ENCODE measurements at regions of chr5 and their contacts with region 1.

Region 1: DNA sequence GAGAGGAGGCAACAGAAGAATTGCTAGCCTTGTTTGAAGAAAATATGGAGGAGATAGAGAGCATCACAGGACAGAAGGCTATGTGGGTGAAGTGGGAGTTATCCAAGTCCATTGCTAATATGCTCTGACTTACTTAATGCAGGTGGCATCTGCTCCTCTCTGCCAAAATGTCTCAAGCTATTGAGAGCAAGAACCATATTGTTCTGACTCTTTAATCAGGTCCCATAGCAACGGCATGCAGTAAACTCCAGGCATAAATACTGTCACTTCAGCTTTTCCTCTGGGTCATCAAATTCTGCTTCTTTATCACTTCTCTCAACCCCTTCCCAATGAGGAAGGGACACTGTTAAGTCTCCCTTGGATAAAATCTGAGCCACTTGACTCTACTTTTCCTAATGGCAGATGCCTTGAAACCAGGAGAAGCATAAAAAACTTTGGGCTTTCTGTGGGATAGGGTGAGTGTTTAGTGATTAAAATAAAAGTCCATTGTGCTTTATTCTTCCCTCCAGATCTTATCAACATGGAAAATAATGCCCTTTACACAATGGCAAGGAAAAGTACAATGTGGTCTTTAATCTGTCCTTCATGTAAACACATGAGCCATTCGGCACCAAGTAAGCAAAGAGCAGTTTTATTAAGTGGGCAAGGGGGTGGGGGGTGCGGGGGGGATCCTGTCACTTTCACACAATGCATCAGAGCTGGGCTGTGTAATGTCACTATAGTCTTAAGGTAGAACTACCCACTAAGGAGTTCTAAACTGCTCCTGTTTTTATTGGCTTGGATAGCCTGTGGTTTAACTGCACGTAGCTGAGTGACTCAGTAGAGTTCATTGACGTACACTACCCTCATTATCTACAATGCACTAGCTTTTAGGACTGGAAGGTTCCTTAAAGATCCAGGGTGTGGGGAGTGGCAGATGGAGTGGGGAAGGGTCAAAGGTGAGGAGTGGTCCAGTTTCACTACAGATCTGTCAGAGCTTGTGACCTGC is 71.0 kb upstream of the TARS1 start:
- DNase-seq: no peak
- ATAC-seq: peak; percentile 72

Region 2: DNA sequence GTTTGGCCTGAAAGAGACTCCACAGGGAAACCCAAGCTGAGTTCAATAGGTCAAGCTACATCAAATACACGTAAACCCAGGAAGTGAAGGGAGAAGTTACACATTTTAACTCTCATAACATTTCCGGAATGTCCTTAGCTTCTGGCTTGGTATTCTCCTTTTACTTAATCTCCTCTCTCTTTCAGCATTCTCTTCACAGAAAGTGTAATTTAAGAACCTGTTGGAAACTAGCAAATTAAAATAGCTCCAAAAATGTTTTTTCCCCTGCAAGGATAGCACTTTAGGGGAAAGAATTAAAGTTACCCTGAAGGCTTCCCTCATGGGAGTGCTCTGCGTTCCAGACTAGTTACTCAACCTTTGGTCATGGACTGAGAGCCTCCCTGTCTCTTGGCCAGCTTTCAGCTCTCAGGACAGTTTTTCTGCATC is 221.7 kb before region 1 on chr5:
- intact Hi-C with region 1: no loop called
- DNase-seq: no peak
- ATAC-seq: peak; percentile 97

Region 3: DNA sequence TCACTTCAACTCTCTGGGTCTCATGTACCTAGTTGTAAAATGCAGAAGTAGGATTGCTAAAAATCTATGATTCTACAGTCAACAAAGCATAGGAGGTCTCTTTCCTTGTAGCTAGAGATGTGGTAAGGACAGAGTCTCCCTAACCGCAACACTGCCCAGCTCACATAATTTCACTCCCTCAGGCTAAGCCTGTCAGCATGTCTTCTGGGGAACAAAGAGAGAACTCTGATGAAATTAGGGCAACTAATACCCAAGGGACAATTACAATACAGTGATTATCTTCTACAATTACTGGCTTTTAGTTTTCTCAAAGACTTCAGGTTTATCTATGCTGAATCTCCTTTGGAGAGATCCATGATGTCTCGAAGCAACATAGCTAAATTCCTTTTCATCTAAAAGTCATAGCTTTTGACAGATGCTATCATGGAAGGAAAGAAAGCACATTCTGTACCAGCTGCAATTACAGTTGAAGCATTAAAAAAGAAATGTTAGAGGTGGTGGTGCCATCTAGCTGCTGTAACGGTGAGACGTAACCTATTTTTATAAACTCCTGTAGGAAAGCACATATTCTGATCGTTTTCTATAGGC is 70.1 kb before region 1 on chr5:
- intact Hi-C with region 1: loop called (anchors 2 kb)
- DNase-seq: no peak
- ATAC-seq: peak; percentile 86

Region 4: DNA sequence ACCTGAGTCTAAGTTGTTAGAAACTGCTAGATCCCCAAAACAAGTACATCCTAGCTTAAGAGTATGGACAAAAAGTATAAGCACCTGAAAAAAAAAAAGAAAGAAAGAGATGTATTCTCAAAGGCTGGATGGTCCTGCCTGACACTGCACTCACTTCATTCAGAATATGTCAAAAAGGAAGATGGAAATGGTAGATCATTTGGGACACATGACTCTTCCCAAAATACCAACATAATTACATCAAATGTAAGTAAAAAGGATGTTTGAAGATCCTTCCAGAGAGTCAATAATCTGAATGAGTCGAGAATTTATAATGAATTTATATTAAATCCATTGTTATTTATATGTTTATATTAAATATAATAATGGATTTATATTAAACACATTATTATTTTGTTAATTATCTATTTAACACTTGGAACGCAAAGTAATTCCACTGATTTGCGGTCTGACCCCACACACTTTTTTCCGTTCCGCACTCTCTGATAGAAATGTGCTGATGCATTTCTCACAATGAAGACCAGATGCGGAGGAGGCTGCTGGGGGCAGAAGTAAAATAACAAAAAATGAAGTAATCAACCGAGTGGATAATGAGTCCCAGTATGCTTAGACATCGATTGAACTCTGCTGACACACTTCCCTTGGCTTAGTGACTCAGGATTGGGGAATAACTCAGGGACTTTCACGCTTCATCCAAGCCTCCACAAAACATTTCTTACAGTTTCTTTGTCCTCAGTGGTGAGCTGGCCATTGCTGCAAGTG is 320.8 kb after region 1 on chr5:
- intact Hi-C with region 1: no loop called
- DNase-seq: no peak
- ATAC-seq: no peak

Measured in Right ventricle myocardium inferior (tissue), 1 donor.